GM12878 (cell line): ENCODE measurements at regions of chr20 and their contacts with region 1.

Region 1: DNA sequence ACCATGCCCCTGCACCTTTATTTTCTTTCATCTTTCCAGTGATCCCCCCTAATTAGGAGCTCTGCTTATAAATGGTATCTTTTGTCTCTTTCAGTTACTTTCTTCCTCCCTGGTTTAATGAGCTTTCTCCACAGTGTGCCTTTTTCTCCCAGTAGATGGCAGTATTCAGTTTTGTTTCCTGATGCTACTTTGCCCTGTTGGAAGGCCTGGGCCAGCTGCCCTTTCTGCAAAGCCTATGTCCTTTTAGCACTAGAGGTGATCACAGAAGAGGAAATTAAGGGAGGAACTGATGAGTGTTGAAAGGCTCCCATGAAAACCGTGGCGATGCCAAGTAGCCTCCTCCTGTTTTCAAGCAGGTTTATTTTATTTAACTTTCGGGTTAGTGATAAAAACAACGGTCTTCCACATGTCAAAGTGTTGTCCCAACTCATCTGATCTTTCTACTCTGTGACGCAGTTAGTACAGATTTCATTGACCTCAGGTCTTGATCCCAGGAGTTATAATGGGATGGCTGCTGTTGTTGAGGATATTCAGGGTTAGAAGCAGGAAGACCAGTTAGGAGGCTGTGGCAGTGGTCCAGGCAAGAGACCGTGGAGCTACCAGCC is 184.2 kb upstream of the BMP2 start:
- DNase-seq: peak; percentile 25
- ATAC-seq: peak; percentile 96
- H3K4me3 ChIP-seq: no peak overlapping the region
- H3K27ac ChIP-seq: no peak overlapping the region
- H3K4me1 ChIP-seq: no peaks in the 10 kb centered on the region
- H3K27me3 ChIP-seq: no peaks in the 10 kb centered on the region
- CTCF ChIP-seq: peak; percentile 58 to 81 (median 63)
- EP300 ChIP-seq: no peak
- POLR2A ChIP-seq: no peak
- RAD21 ChIP-seq: peak; percentile 63

Region 2: DNA sequence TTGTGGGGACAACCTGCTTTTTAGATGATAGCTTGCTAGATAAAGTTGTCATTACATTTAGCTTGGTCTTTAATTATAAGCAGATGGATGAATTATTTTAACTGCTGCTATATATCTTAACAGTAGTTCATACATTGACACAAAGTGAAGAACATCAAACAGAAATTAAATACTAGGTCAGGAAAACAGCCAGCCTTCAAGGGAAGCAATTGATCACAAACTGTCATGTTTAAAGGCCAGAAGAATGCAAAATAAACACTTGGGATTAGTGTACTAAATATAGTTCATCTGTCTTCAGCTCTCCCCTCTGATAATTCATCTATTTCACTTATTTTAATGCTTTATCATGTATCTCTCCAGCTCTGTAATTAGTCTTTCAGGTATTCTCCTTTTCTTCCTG is 235.3 kb before region 1 on chr20:
- CTCF ChIA-PET with region 1: no interaction called
- POLR2A ChIA-PET with region 1: no interaction called
- RAD21 ChIA-PET with region 1: no interaction called
- SMC1A ChIA-PET with region 1: no interaction called
- in situ Hi-C with region 1: no loop called
- intact Hi-C with region 1: no loop called
- DNase-seq: no peak
- ATAC-seq: no peak
- H3K4me3 ChIP-seq: no peak overlapping the region
- H3K27ac ChIP-seq: no peak overlapping the region
- H3K4me1 ChIP-seq: no peaks in the 10 kb centered on the region
- H3K27me3 ChIP-seq: no peaks in the 10 kb centered on the region
- CTCF ChIP-seq: no peak
- EP300 ChIP-seq: no peak
- POLR2A ChIP-seq: no peak
- RAD21 ChIP-seq: no peak

Region 3: DNA sequence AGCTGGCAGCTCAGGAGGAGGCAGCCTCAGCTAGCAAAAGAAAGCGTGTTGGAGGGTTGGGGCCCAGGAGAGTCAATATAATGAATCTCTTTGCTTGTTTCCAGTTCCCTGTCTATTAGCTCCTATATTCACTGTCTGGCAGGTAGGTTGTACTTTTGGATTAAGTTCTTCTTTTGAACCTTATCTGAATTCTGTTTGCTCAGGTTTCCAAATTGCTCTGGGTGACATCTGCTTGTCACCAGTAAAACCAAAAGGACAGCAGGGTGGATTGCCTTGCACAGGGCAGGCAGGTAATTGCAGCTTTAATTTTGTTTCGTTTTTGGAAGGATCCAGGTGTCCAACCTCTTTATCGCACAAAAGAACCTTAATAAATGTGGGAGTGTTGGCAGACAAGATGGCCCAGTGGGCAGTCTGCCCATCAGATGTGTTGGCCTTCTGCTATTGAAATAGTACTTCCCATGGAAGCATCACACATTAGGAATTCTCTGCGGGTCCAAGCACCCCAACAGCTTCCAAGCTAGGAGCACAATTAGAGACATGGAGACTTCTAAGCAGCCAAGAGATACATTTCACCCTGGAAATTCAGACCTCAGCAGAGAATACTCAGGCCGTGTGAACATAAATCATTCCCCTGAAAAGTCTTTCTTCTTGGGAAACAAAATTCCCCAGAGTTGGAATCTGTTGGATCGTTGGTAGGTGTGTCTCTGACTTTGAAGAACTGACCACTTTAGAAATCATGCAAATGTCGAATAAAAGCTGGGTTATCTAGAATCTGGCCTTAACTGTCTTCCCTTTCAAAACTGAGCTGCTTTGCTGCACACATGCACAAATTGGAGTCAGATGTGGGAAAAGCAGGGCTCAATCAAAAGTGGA is 102.7 kb before region 1 on chr20:
- CTCF ChIA-PET with region 1: no interaction called
- POLR2A ChIA-PET with region 1: no interaction called
- RAD21 ChIA-PET with region 1: no interaction called
- SMC1A ChIA-PET with region 1: no interaction called
- in situ Hi-C with region 1: no loop called
- intact Hi-C with region 1: no loop called
- DNase-seq: no peak
- ATAC-seq: no peak
- H3K4me3 ChIP-seq: no peak overlapping the region
- H3K27ac ChIP-seq: no peak overlapping the region
- H3K4me1 ChIP-seq: no peaks in the 10 kb centered on the region
- H3K27me3 ChIP-seq: no peaks in the 10 kb centered on the region
- CTCF ChIP-seq: no peak
- EP300 ChIP-seq: no peak
- POLR2A ChIP-seq: no peak
- RAD21 ChIP-seq: no peak

Region 4: DNA sequence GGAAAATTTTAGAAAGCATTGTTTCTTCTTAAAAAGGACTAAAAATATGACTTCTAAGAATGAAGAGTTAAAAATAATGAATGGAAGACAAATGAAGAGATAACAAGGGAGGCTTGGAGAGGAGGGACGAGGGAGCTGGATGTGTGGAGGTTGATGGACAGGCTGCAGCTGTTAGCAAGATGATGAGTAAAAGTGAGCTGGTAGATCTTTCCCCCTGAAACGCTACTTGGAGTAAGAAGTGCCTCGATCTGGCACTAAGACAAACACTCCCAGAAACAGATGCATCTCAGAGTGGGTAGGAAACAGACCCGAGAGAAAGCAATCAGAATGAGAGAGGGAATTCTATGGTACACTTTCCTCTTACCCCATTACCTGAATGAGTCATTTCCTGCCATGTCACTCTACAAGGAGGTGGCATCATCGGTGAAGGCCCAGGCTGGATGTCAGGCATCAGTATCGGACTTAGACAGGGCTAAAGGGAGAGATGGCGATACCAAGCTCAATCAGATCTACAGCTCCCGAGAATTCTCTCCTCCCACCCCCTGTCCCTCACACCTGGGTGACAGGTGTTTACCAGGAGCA is 30.1 kb after region 1 on chr20:
- CTCF ChIA-PET with region 1: interaction called, 20 read pairs
- POLR2A ChIA-PET with region 1: no interaction called
- RAD21 ChIA-PET with region 1: interaction called, 3 read pairs
- SMC1A ChIA-PET with region 1: interaction called, 12 read pairs
- in situ Hi-C with region 1: no loop called
- intact Hi-C with region 1: no loop called
- DNase-seq: no peak
- ATAC-seq: peak; percentile 92
- H3K4me3 ChIP-seq: no peak overlapping the region
- H3K27ac ChIP-seq: no peak overlapping the region
- H3K4me1 ChIP-seq: no peaks in the 10 kb centered on the region
- H3K27me3 ChIP-seq: no peaks in the 10 kb centered on the region
- CTCF ChIP-seq: no peak
- EP300 ChIP-seq: no peak
- POLR2A ChIP-seq: no peak
- RAD21 ChIP-seq: no peak

Region 5: GRCh38 chr20:6663104-6663503 is 79.9 kb after region 1 on chr20:
- CTCF ChIA-PET with region 1: interaction called, 13 read pairs
- POLR2A ChIA-PET with region 1: no interaction called
- RAD21 ChIA-PET with region 1: interaction called, 4 read pairs
- SMC1A ChIA-PET with region 1: interaction called, 4 read pairs
- in situ Hi-C with region 1: no loop called
- intact Hi-C with region 1: no loop called
- DNase-seq: no peak
- ATAC-seq: peak; percentile 72
- H3K4me3 ChIP-seq: no peak overlapping the region
- H3K27ac ChIP-seq: no peak overlapping the region
- H3K4me1 ChIP-seq: no peaks in the 10 kb centered on the region
- H3K27me3 ChIP-seq: no peaks in the 10 kb centered on the region
- CTCF ChIP-seq: no peak
- EP300 ChIP-seq: no peak; a peak in 1 of 4 replicates
- POLR2A ChIP-seq: no peak
- RAD21 ChIP-seq: no peak

Region 6: GRCh38 chr20:6735942-6736845 is 153.0 kb after region 1 on chr20:
- CTCF ChIA-PET with region 1: interaction called, 10 read pairs
- POLR2A ChIA-PET with region 1: no interaction called
- RAD21 ChIA-PET with region 1: no interaction called
- SMC1A ChIA-PET with region 1: interaction called, 3 read pairs
- in situ Hi-C with region 1: no loop called
- intact Hi-C with region 1: no loop called
- DNase-seq: no peak
- ATAC-seq: peak; percentile 52
- H3K4me3 ChIP-seq: no peak overlapping the region
- H3K27ac ChIP-seq: no peak overlapping the region
- H3K4me1 ChIP-seq: no peaks in the 10 kb centered on the region
- H3K27me3 ChIP-seq: no peaks in the 10 kb centered on the region; a peak in 1 of 4 replicates
- CTCF ChIP-seq: no peak
- EP300 ChIP-seq: no peak
- POLR2A ChIP-seq: no peak
- RAD21 ChIP-seq: no peak

Region 7: GRCh38 chr20:6828794-6829423 is 245.7 kb after region 1 on chr20:
- CTCF ChIA-PET with region 1: interaction called, 10 read pairs
- POLR2A ChIA-PET with region 1: no interaction called
- RAD21 ChIA-PET with region 1: no interaction called
- SMC1A ChIA-PET with region 1: interaction called, 5 read pairs
- in situ Hi-C with region 1: no loop called
- intact Hi-C with region 1: no loop called
- DNase-seq: peak; percentile 30
- ATAC-seq: peak; percentile 92
- H3K4me3 ChIP-seq: no peak overlapping the region
- H3K27ac ChIP-seq: no peak overlapping the region
- H3K4me1 ChIP-seq: no peaks in the 10 kb centered on the region
- H3K27me3 ChIP-seq: no peaks in the 10 kb centered on the region; a peak in 1 of 4 replicates
- CTCF ChIP-seq: peak; percentile 57 to 72 (median 63)
- EP300 ChIP-seq: no peak
- POLR2A ChIP-seq: no peak
- RAD21 ChIP-seq: peak; percentile 75

Region 8: GRCh38 chr20:7285918-7286556 is 702.8 kb after region 1 on chr20:
- CTCF ChIA-PET with region 1: interaction called, 18 read pairs
- POLR2A ChIA-PET with region 1: no interaction called
- RAD21 ChIA-PET with region 1: interaction called, 10 read pairs
- SMC1A ChIA-PET with region 1: interaction called, 12 read pairs
- in situ Hi-C with region 1: no loop called
- intact Hi-C with region 1: no loop called
- DNase-seq: peak; percentile 12
- ATAC-seq: peak; percentile 96
- H3K4me3 ChIP-seq: no peak overlapping the region
- H3K27ac ChIP-seq: no peak overlapping the region
- H3K4me1 ChIP-seq: no peaks in the 10 kb centered on the region
- H3K27me3 ChIP-seq: no peaks in the 10 kb centered on the region
- CTCF ChIP-seq: peak; percentile 66 to 83 (median 74)
- EP300 ChIP-seq: no peak
- POLR2A ChIP-seq: no peak
- RAD21 ChIP-seq: peak; percentile 72